ENCODE measurements at regions of chr3 and their contacts with region 1.

Region 1: DNA sequence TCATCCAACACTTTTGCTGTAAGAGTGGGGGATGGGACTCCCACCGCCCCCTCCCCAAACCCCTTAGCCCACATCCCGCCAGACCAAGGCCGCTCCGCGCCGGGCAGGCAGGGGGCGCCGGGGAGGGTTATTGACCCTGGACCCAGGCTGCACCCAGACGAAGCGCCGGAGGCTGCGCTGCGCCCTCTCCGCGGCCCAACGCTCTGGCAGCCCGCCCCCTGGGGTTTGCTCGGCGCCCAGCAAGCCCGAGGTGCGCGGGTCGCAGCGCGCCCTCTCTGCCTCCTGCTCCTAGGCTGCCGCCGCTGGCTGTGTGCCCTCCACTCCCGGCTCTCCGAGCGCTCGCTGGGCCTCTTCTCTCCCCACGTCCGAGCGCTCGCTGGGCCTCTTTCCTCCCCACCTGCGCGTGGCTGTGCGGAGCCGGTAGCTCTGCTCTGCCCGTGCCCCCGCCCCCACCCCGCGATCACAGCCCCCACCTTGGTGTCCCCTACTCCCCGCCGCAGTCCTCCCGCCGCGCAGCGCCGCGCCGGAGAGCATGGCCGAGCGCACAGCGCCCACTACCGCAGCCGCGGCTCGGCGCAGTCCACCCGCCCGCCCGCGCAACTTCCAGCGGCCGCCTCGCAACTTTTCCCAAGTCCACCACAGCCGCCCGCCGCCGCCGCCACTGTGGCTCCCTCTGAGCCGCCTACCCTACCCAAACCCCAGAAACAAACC is 1.2 kb downstream of the MECOM start:
- DNase-seq: peak; percentile 63 to 78
- ATAC-seq: peak; percentile 85 to 90 (median 87)
- H3K4me3 ChIP-seq: peak overlapping the region; percentile 80
- H3K27ac ChIP-seq: peak overlapping the region; percentile 64
- H3K4me1 ChIP-seq: peaks cover 12% of the 10 kb centered on the region
- H3K27me3 ChIP-seq: peaks cover 0 to 94% (median 32%) of the 10 kb centered on the region in 3 donors
- CTCF ChIP-seq: peak; percentile 52

Region 2: DNA sequence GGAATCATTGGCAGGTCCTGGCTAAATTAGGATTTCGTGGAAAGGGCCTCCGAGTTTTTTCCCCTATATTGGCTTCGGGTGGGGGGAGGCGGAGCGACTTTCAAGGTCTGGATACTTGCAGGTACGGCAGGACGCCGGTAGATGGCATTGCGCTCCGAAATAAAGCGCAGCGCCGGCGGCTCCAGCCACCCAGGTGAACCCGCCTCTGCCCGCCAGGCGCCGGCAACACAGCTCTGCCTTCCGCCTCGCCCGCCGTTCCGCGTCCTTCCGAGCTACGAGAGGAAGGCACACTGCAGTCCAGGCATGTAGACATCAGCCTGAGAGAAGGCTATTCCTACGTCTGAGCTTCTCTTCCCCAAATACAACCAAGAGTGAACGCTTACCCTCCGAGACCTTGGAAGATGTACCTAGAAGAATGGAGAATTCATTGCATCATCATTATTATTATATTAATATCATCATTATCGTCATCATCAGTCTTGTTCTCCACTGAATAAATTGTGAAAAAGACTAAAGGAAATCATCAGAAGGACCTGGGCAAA is 512.9 kb before region 1 on chr3:
- intact Hi-C with region 1: loop called in 1 of 2 experiments (anchors 5 kb)
- DNase-seq: peak; percentile 72 to 83
- ATAC-seq: peak; percentile 89 to 95 (median 92)
- H3K4me3 ChIP-seq: peak overlapping the region; percentile 38
- H3K27ac ChIP-seq: peak overlapping the region; percentile 11
- H3K4me1 ChIP-seq: peaks cover 6% of the 10 kb centered on the region
- H3K27me3 ChIP-seq: peaks cover 12 to 52% (median 13%) of the 10 kb centered on the region in 3 donors
- CTCF ChIP-seq: peak; percentile 83